Activated CD8-positive, alpha-beta T cell treated with anti-CD3 and anti-CD28 coated beads for 36 hours (primary cell): ENCODE measurements at regions of chr16 and their contacts with region 1.

Region 1: DNA sequence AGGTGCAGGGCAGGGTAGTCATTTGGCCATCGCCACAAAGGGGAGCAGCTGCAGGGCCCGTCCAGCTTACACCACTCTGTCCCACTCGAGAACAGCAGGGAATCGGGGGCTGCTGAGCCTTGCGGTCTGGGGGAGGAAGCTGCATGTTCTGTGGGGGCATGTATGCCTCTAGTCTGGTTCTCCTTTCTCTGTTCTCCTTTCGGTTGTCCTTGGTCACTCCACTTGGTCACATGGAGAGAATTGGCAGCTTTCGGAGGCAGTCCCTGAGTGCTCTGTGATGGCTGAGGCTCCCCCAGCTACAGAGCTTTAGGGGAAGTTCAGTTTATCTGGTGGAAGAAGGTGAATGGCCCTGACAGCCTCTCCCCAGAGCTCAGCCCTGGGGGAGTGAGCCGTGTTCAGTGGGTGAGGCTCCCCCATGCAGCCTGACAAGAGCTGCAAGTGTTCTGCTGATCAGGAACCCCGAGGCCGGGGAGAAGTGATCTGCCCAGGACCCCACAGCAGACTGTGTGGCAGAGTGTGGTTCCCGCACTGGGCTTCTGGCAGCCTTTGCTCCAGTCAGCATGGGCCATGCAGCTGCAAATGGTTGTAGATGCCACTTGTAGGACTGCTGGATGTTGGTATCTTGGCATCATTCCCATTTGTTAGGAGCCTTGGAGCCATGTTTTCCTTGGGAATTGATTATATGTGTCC is 22.3 kb upstream of the SMPD3 start:
- DNase-seq: peak; percentile 32
- ATAC-seq: peak; percentile 74
- H3K4me3 Mint-ChIP-seq: peak overlapping the region; percentile 72
- H3K27ac Mint-ChIP-seq: peak overlapping the region; percentile 88
- H3K4me1 Mint-ChIP-seq: peaks cover 38% of the 10 kb centered on the region
- H3K27me3 Mint-ChIP-seq: no peaks in the 10 kb centered on the region
- CTCF ChIP-seq: no peak

Region 2: GRCh38 chr16:68520649-68521086 is 50.1 kb after region 1 on chr16:
- CTCF ChIA-PET with region 1: interaction called, 14 read pairs
- POLR2A ChIA-PET with region 1: no interaction called
- intact Hi-C with region 1: no loop called
- DNase-seq: peak; percentile 95
- ATAC-seq: peak; percentile 99
- H3K4me3 Mint-ChIP-seq: peak overlapping the region; percentile 21
- H3K27ac Mint-ChIP-seq: no peak overlapping the region
- H3K4me1 Mint-ChIP-seq: peaks cover 8% of the 10 kb centered on the region
- H3K27me3 Mint-ChIP-seq: peaks cover 1% of the 10 kb centered on the region
- CTCF ChIP-seq: peak; percentile 99